ENCODE measurements at regions of chr4 and their contacts with region 1.

Region 1: GRCh38 chr4:33073811-33074210 is 2353.6 kb downstream of the PCDH7 start:
- DNase-seq: no peak
- H3K4me3 ChIP-seq: no peak overlapping the region
- H3K27ac ChIP-seq: no peak overlapping the region
- H3K4me1 ChIP-seq: peaks cover 0 to 18% (median 6%) of the 10 kb centered on the region in 4 donors
- H3K27me3 ChIP-seq: no peaks in the 10 kb centered on the region
- CTCF ChIP-seq: no peak

Region 2: GRCh38 chr4:33104190-33104773 is 30.5 kb after region 1 on chr4:
- intact Hi-C with region 1: loop called (anchors 2 kb)
- DNase-seq: no peak
- H3K4me3 ChIP-seq: no peak overlapping the region
- H3K27ac ChIP-seq: no peak overlapping the region
- H3K4me1 ChIP-seq: no peaks in the 10 kb centered on the region
- H3K27me3 ChIP-seq: no peaks in the 10 kb centered on the region
- CTCF ChIP-seq: no peak